ENCODE measurements at regions of chr6 and their contacts with region 1.

Region 1: DNA sequence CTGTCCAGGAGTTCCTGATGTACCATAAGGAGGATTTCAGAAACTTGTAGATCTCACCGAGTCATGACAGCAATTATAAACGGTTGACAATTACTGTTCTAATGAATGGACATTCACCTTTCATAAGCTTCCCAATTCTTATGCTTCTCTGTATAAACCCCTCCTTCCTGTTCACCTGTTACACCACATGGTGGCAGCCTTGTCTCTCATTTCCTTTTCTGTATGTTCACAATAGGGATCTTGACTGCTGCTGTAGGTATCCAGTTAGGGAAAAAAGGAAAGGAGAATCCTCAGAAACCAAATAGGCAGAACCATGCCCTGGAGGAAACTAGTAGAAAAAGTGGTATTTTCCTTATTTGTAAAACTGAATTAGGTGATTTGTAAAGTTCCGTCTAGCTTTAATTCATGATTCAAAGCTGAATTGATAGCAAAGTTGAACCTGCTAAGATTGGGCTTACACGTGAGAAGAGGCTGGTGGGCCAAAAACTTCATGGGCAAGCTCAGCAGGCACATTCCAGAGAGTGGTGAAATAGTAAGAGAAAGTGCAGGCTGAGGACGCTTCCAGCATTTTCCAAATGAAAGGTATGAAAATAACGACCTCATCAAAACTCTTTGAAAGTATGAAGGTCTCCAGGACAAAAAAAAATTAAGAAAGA is 29.0 kb upstream of the TBPL1 start:
- DNase-seq: peak; percentile 58 to 78
- ATAC-seq: peak; percentile 91 to 95
- H3K4me3 ChIP-seq: no peak overlapping the region
- H3K27ac ChIP-seq: no peak overlapping the region
- H3K4me1 ChIP-seq: no peaks in the 10 kb centered on the region
- CTCF ChIP-seq: peak; percentile 87
- EP300 ChIP-seq: no peak
- POLR2A ChIP-seq: no peak
- RAD21 ChIP-seq: peak; percentile 88 to 94

Region 2: DNA sequence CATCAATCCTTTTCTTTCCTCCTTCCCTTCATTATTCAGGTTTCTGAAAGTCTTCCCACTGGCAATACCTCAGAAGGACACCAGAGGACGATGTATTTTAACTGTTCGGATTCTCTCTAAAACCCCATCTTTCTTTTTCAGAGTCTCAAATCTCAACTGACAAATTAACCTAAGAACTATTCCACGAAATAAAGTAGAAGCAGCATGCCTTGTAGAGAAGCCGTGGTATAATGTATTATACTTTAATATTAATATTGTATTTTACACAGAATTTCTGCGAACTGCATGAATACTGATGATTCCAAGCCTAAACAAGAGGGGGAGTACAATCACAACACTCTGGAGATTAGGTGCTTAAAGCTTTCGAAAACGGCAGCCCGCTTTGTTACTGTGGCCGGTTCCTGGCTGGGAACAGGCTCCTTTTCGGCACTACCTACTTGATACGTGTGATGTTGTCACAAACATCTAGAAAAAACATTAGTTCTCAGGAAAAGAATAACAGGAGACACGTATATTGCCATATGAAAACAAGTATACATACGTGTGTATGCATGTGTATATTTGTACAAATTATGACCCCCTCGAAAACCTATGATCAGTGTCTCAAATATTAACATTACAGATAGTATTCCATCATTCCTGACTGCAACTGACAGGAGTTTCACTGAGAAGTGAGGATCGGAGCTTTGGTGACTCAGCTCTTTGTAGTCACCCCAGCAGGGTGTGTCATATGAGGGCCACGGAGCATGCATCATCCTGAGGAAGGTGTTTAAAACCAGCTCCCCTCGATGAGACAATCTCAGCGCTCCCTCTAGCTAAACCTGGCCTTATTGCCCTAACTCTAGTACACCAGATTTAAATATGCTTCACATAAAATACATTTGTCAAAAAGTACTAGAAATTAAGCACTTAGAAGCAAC is 354.8 kb before region 1 on chr6:
- CTCF ChIA-PET with region 1: interaction called, 82 read pairs
- POLR2A ChIA-PET with region 1: no interaction called
- DNase-seq: peak; percentile 92 to 96
- ATAC-seq: peak; percentile 98 to 100
- H3K4me3 ChIP-seq: peak overlapping the region; percentile 43
- H3K27ac ChIP-seq: peak overlapping the region; percentile 93 to 98
- H3K4me1 ChIP-seq: peaks cover 30% of the 10 kb centered on the region
- CTCF ChIP-seq: peak; percentile 90
- EP300 ChIP-seq: peak; percentile 58 to 69; a peak in 3 of 5 replicates
- POLR2A ChIP-seq: no peak
- RAD21 ChIP-seq: peak; percentile 85 to 89

Region 3: GRCh38 chr6:133939778-133940667 is 16.0 kb after region 1 on chr6:
- CTCF ChIA-PET with region 1: interaction called, 20 read pairs
- POLR2A ChIA-PET with region 1: no interaction called
- DNase-seq: no peak
- ATAC-seq: no peak
- H3K4me3 ChIP-seq: no peak overlapping the region
- H3K27ac ChIP-seq: no peak overlapping the region
- H3K4me1 ChIP-seq: no peaks in the 10 kb centered on the region
- CTCF ChIP-seq: no peak
- EP300 ChIP-seq: no peak
- POLR2A ChIP-seq: no peak
- RAD21 ChIP-seq: no peak

Region 4: DNA sequence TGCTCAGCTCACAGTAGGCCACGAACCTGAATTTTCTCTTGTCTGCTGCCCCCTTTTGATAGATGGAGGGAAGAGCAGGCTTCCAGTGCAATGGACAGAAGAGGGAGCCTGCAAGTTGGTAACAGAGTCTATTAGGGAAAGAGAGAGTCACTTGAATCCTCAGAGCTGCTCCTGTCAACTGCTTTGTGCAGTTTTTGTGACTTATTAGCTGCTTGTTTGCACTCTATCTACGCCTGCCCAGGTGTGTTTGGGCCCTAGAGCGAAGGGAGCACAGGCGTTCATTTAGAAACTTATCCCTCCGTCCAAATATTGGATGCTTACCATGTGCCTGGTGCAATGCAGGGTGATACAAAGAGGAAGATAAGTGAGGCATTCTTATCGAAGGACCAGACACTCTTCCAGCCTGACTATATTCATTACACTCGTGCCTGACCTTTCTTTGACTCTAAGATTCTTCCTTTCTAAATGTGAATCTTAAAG is 139.9 kb after region 1 on chr6:
- CTCF ChIA-PET with region 1: interaction called, 44 read pairs
- POLR2A ChIA-PET with region 1: no interaction called
- DNase-seq: peak; percentile 69 to 72
- ATAC-seq: peak; percentile 95 to 97
- H3K4me3 ChIP-seq: no peak overlapping the region
- H3K27ac ChIP-seq: 0 out of 6 replicates have a peak overlapping the region, but pooled peaks of 1 of the 2 experiments have one; percentile 9
- H3K4me1 ChIP-seq: peaks cover 20% of the 10 kb centered on the region
- CTCF ChIP-seq: peak; percentile 69
- EP300 ChIP-seq: no peak
- POLR2A ChIP-seq: no peak
- RAD21 ChIP-seq: peak; percentile 78 to 82

Region 5: DNA sequence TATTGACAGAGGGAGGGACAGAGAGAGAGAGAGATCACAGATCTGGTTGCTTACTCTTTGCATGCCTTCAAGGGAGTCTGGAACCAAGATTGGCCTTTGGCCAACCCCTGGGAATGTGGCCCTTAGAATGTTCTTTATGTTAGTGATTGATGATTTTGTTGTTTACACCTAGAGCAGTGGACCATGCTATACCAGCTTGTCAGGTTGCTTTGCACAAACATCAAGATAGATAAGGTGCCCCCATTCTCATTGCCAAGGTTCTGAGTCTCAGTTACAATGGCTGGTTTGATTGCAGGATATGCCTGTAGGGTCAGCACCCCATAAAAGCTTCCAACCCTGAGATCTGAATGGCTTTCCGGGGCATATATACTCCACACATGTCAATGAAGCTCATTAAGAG is 181.9 kb after region 1 on chr6:
- CTCF ChIA-PET with region 1: interaction called, 300 read pairs
- POLR2A ChIA-PET with region 1: no interaction called
- DNase-seq: no peak
- ATAC-seq: no peak
- H3K4me3 ChIP-seq: no peak overlapping the region
- H3K27ac ChIP-seq: peak overlapping the region in 1 of 2 experiments; percentile 38; a peak in 1 of 6 replicates
- H3K4me1 ChIP-seq: peaks cover 27% of the 10 kb centered on the region
- CTCF ChIP-seq: no peak
- EP300 ChIP-seq: no peak
- POLR2A ChIP-seq: no peak
- RAD21 ChIP-seq: no peak

Region 6: GRCh38 chr6:134161036-134161435 is 237.0 kb after region 1 on chr6:
- CTCF ChIA-PET with region 1: no interaction called
- POLR2A ChIA-PET with region 1: no interaction called
- DNase-seq: no peak
- ATAC-seq: no peak
- H3K4me3 ChIP-seq: no peak overlapping the region
- H3K27ac ChIP-seq: peak overlapping the region; percentile 21 to 37; a peak in 1 of 6 replicates
- H3K4me1 ChIP-seq: peaks cover 5% of the 10 kb centered on the region; the same call in 1 of the 3 replicates
- CTCF ChIP-seq: no peak
- EP300 ChIP-seq: no peak
- POLR2A ChIP-seq: no peak
- RAD21 ChIP-seq: no peak